Adrenal gland (tissue), 19 donors: ENCODE measurements at regions of chr20 and their contacts with region 1.

Region 1: GRCh38 chr20:47272893-47273590 is 83.5 kb downstream of the ZMYND8 start:
- DNase-seq: peak in 5 of 7 donors; percentile 53 to 69 (median 65)
- H3K4me3 ChIP-seq: no peak overlapping the region
- H3K27ac ChIP-seq: peak overlapping the region in 4 of 5 donors; percentile 77 to 85 (median 80)
- H3K4me1 ChIP-seq: peaks cover 40 to 64% of the 10 kb centered on the region in 2 donors
- H3K27me3 ChIP-seq: no peaks in the 10 kb centered on the region
- CTCF ChIP-seq: peak; percentile 63 to 98 (median 92)
- POLR2A ChIP-seq: no peak

Region 2: DNA sequence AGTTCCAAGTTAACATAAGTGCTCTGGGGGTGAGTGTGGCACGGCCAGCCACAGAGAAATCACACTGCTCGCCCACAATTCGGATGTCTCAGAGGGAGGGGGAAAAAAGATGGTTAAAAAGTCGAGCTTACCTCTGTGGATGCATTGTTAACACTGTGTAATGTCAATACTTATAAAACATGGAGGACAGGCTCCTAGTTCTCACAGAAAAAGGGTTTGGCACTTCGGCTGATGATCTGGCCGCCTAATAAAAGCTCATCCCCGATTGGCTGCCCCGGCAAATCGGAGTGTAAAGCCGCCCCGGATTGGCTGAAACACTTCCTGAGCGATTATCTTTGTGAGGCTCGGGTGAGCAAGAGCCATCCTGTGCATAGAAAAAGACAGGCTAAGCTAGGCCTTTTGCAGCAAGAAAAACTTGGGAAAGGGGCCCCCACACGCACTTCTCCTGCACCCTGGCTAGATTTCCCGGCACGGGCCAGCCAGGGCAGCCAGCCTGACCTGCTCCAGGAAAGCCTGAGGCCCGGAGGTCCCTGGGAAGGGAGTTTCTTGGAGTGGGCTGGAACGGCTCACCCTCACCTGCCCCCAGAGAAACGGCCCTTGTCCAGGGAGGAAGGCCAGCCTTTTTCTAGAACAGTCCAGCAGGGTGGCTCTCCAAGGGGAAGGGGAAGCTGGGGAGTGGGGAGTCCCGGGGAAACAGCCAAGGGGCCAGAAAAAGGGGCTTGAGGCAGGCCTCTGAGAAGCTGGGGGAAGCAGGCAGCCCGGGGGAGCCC is 83.7 kb after region 1 on chr20 and contains the start of gene ZMYND8:
- intact Hi-C with region 1: loop called in 1 of 2 experiments (anchors 5 kb)
- DNase-seq: peak; percentile 86 to 99 (median 91)
- H3K4me3 ChIP-seq: peak within 1 kb of the TSS in 1 of 4 donors; percentile 49
- H3K27ac ChIP-seq: peak within 1 kb of the TSS; percentile 95 to 99 (median 98)
- H3K4me1 ChIP-seq: peaks cover 96 to 100% of the 10 kb centered on the region in 2 donors
- H3K27me3 ChIP-seq: no peaks in the 10 kb centered on the region
- CTCF ChIP-seq: no peak
- POLR2A ChIP-seq: peak in 1 of 2 donors; percentile 69
- total RNA-seq, gene ZMYND8: 42.9 to 116 (median 68.2) TPM

Region 3: DNA sequence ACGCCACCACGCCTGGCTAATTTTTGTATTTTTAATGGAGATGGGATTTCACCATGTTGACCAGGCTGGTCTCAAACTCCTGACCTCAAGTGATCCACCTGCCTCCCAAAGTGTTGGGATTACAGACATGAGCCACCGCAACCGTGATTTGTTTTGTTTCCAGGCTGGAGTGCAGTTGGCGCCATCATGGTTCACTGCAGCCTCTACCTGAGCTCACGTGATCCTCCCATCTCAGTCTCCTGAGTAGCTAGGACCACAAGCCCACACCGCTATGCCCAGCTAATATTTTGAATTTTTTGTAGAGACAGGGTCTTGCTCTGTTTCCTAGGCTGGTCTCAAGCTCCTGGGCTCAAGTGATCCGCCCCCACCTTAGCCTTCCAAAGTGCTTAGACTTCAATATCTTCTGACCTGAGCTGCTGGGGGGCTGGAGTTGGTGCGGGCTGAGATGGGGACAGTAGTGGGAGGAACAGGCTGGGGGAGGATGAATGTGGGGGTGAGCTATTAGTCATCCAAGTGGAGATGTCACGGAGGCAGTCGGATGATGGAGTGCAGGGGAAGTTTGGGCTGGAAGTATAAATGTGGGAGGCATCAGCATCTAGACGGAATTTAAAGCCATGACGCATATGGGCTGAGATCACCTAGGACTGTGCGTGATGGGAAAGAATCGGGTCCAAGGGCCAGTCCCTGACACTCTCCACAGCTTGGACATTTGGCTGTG is 106.5 kb after region 1 on chr20:
- intact Hi-C with region 1: loop called (anchors 5 kb)
- DNase-seq: no peak
- H3K4me3 ChIP-seq: no peak overlapping the region
- H3K27ac ChIP-seq: no peak overlapping the region
- H3K4me1 ChIP-seq: peaks cover 0 to 22% of the 10 kb centered on the region in 2 donors
- H3K27me3 ChIP-seq: no peaks in the 10 kb centered on the region
- CTCF ChIP-seq: no peak
- POLR2A ChIP-seq: no peak